ENCODE measurements at regions of chr2 and their contacts with region 1.

Region 1: GRCh38 chr2:65129826-65130663 is at the start of gene RAB1A:
- DNase-seq: peak; percentile 98 to 100 (median 99)
- ATAC-seq: peak; percentile 89
- H3K4me3 ChIP-seq: peak within 1 kb of the TSS; percentile 80
- H3K4me3 Mint-ChIP-seq: peak within 1 kb of the TSS; percentile 100
- H3K27ac ChIP-seq: peak within 1 kb of the TSS; percentile 95
- H3K27ac Mint-ChIP-seq: peak within 1 kb of the TSS; percentile 98
- H3K4me1 ChIP-seq: peaks cover 30% of the 10 kb centered on the region
- H3K4me1 Mint-ChIP-seq: peaks cover 45% of the 10 kb centered on the region
- H3K27me3 ChIP-seq: no peaks in the 10 kb centered on the region
- H3K27me3 Mint-ChIP-seq: no peaks in the 10 kb centered on the region
- CTCF ChIP-seq: peak; percentile 37
- total RNA-seq, gene RAB1A: 85.3 to 87.6 TPM

Region 2: GRCh38 chr2:65064728-65065552 is 65.1 kb before region 1 on chr2:
- CTCF ChIA-PET with region 1: interaction called, 13 read pairs
- POLR2A ChIA-PET with region 1: interaction called, 8 read pairs
- intact Hi-C with region 1: loop called in 1 of 2 experiments (anchors 5 kb)
- DNase-seq: peak in 8 of 14 experiments; percentile 19 to 84 (median 40)
- ATAC-seq: peak; percentile 91
- H3K4me3 ChIP-seq: no peak overlapping the region
- H3K4me3 Mint-ChIP-seq: no peak overlapping the region
- H3K27ac ChIP-seq: peak overlapping the region in 1 of 2 donors; percentile 33
- H3K27ac Mint-ChIP-seq: peak overlapping the region; percentile 32
- H3K4me1 ChIP-seq: peaks cover 58% of the 10 kb centered on the region
- H3K4me1 Mint-ChIP-seq: peaks cover 58% of the 10 kb centered on the region
- H3K27me3 ChIP-seq: no peaks in the 10 kb centered on the region
- H3K27me3 Mint-ChIP-seq: no peaks in the 10 kb centered on the region
- CTCF ChIP-seq: peak; percentile 72

Region 3: DNA sequence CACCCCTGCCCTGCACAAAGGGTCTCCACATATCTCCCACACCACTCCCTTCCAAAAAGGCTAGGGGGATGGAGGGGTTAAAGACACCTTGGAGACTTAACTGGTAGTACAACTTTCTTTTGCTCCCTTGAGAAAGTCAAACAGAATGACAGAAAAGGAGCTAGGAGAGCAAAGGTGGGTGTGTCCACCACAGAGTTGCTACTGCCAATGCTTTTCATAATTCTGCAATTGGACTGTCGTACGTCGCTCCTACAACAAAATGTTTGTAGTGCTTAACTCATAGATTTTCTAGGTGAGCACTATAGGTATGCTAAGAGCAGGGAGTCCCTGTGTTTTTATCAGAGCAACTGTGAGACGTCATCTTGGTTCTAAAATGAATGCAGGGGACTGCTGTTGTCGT is 46.9 kb before region 1 on chr2:
- CTCF ChIA-PET with region 1: interaction called, 6 read pairs
- POLR2A ChIA-PET with region 1: interaction called, 10 read pairs
- intact Hi-C with region 1: no loop called
- DNase-seq: no peak
- ATAC-seq: no peak
- H3K4me3 ChIP-seq: no peak overlapping the region
- H3K4me3 Mint-ChIP-seq: no peak overlapping the region
- H3K27ac ChIP-seq: no peak overlapping the region
- H3K27ac Mint-ChIP-seq: peak overlapping the region; percentile 61
- H3K4me1 ChIP-seq: peaks cover 3% of the 10 kb centered on the region
- H3K4me1 Mint-ChIP-seq: peaks cover 26% of the 10 kb centered on the region
- H3K27me3 ChIP-seq: no peaks in the 10 kb centered on the region
- H3K27me3 Mint-ChIP-seq: no peaks in the 10 kb centered on the region
- CTCF ChIP-seq: no peak

Region 4: DNA sequence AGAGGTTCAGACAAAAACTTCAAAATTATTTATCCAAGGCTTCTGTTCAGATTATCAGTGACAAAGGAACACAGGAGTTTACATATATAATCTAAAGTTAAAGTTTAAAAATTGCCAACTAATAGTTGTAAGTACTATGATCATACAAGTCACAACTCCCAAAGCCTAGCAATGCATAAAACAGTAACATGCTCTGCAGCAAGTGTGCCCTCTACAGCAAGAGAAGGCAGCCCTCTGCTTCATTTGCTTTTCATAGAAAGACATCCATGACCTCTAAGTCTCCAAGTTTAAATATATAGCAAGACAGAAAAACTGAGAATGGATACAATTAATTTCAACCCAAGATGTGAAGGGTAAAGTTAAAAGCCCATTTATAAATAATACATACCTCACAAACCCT is 13.4 kb before region 1 on chr2:
- CTCF ChIA-PET with region 1: interaction called, 4 read pairs
- POLR2A ChIA-PET with region 1: interaction called, 15 read pairs
- intact Hi-C with region 1: no loop called
- DNase-seq: no peak
- ATAC-seq: no peak
- H3K4me3 ChIP-seq: no peak overlapping the region
- H3K4me3 Mint-ChIP-seq: no peak overlapping the region
- H3K27ac ChIP-seq: no peak overlapping the region
- H3K27ac Mint-ChIP-seq: no peak overlapping the region
- H3K4me1 ChIP-seq: peaks cover 47% of the 10 kb centered on the region
- H3K4me1 Mint-ChIP-seq: peaks cover 75% of the 10 kb centered on the region
- H3K27me3 ChIP-seq: no peaks in the 10 kb centered on the region
- H3K27me3 Mint-ChIP-seq: no peaks in the 10 kb centered on the region
- CTCF ChIP-seq: no peak